ENCODE measurements at regions of chr1 and their contacts with region 1.

Region 1: GRCh38 chr1:206612129-206612876 is at the start of gene EIF2D:
- DNase-seq: peak; percentile 91
- H3K4me3 Mint-ChIP-seq: peak within 1 kb of the TSS; percentile 98
- H3K27ac Mint-ChIP-seq: peak within 1 kb of the TSS; percentile 94
- H3K4me1 Mint-ChIP-seq: peaks cover 41% of the 10 kb centered on the region
- H3K27me3 Mint-ChIP-seq: peaks cover 8% of the 10 kb centered on the region
- total RNA-seq, gene EIF2D: 89.1 and 101 TPM in 2 replicates

Region 2: GRCh38 chr1:206513312-206514111 is 98.8 kb before region 1 on chr1:
- intact Hi-C with region 1: no loop called
- DNase-seq: no peak
- H3K4me3 Mint-ChIP-seq: no peak overlapping the region
- H3K27ac Mint-ChIP-seq: no peak overlapping the region
- H3K4me1 Mint-ChIP-seq: peaks cover 23% of the 10 kb centered on the region
- H3K27me3 Mint-ChIP-seq: peaks cover 10% of the 10 kb centered on the region

Region 3: DNA sequence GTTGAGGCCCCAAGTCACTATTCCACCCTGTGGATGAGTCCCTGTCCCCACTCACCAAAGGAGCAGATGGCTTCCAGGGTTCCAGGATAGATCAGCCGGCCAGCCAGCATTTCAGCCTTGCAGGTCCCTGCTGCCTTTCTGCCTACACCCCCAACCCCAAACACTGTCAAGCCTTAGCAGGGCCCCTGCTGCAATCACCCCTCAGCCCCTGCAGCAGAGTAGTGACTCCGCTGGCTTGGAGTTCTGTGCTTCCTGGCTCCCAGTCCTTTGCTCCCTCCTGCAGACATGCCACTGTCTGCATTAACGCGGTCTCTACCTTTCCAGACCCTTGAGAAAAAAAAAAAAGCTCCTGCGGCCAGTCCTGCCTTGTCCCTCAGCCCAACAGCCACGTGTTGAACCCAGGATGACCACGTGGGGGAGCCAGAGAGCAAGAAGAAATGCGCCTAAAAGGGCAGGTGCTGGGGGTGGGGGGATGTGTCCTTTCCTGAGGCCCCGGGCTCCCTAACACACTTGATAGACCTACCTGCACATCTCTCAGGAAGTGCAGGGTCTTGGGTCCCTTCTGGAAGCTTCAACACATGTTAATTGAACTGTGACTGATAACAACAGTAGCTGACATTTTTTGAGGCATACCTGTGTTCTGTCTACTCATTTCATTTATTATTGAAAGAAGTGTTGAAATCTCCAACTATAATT is 67.6 kb before region 1 on chr1:
- intact Hi-C with region 1: loop called (anchors 2 kb)
- DNase-seq: peak; percentile 69
- H3K4me3 Mint-ChIP-seq: no peak overlapping the region
- H3K27ac Mint-ChIP-seq: peak overlapping the region; percentile 22
- H3K4me1 Mint-ChIP-seq: peaks cover 33% of the 10 kb centered on the region
- H3K27me3 Mint-ChIP-seq: peaks cover 2% of the 10 kb centered on the region

Region 4: GRCh38 chr1:206583707-206584648 is 28.3 kb before region 1 on chr1:
- intact Hi-C with region 1: loop called (anchors 1 kb)
- DNase-seq: peak; percentile 70
- H3K4me3 Mint-ChIP-seq: peak overlapping the region; percentile 85
- H3K27ac Mint-ChIP-seq: peak overlapping the region; percentile 100
- H3K4me1 Mint-ChIP-seq: peaks cover 95% of the 10 kb centered on the region
- H3K27me3 Mint-ChIP-seq: no peaks in the 10 kb centered on the region

Region 5: GRCh38 chr1:206635080-206635977 is 23.0 kb after region 1 on chr1 and contains the start of gene DYRK3:
- intact Hi-C with region 1: loop called (anchors 1 kb)
- DNase-seq: peak; percentile 95
- H3K4me3 Mint-ChIP-seq: peak within 1 kb of the TSS; percentile 89
- H3K27ac Mint-ChIP-seq: peak within 1 kb of the TSS; percentile 95
- H3K4me1 Mint-ChIP-seq: peaks cover 38% of the 10 kb centered on the region
- H3K27me3 Mint-ChIP-seq: peaks cover 7% of the 10 kb centered on the region
- total RNA-seq, gene DYRK3: 22.1 and 23.3 TPM in 2 replicates

Region 6: GRCh38 chr1:206684478-206685333 is 72.4 kb after region 1 on chr1 and contains the start of gene MAPKAPK2:
- intact Hi-C with region 1: loop called (anchors 1 kb)
- DNase-seq: peak; percentile 69
- H3K4me3 Mint-ChIP-seq: peak within 1 kb of the TSS; percentile 98
- H3K27ac Mint-ChIP-seq: peak within 1 kb of the TSS; percentile 96
- H3K4me1 Mint-ChIP-seq: peaks cover 72% of the 10 kb centered on the region
- H3K27me3 Mint-ChIP-seq: peaks cover 7% of the 10 kb centered on the region
- total RNA-seq, gene MAPKAPK2: 117 and 120 TPM in 2 replicates

Region 7: GRCh38 chr1:206816390-206817287 is 204.3 kb after region 1 on chr1:
- intact Hi-C with region 1: loop called (anchors 1 kb)
- DNase-seq: peak; percentile 41
- H3K4me3 Mint-ChIP-seq: peak overlapping the region; percentile 47
- H3K27ac Mint-ChIP-seq: peak overlapping the region; percentile 88
- H3K4me1 Mint-ChIP-seq: peaks cover 43% of the 10 kb centered on the region
- H3K27me3 Mint-ChIP-seq: no peaks in the 10 kb centered on the region

Region 8: GRCh38 chr1:206982216-206982615 is 369.9 kb after region 1 on chr1:
- intact Hi-C with region 1: loop called (anchors 10 kb)
- DNase-seq: peak; percentile 36
- H3K4me3 Mint-ChIP-seq: no peak overlapping the region
- H3K27ac Mint-ChIP-seq: no peak overlapping the region
- H3K4me1 Mint-ChIP-seq: no peaks in the 10 kb centered on the region
- H3K27me3 Mint-ChIP-seq: peaks cover 34% of the 10 kb centered on the region